HepG2 (cell line): ENCODE measurements at regions of chr6 and their contacts with region 1.

Region 1: GRCh38 chr6:29705389-29706231 is 17.6 kb upstream of the HLA-F start:
- DNase-seq: peak; percentile 62
- ATAC-seq: peak; percentile 64
- H3K4me3 ChIP-seq: no peak overlapping the region
- H3K27ac ChIP-seq: no peak overlapping the region
- H3K4me1 ChIP-seq: peaks cover 10% of the 10 kb centered on the region
- H3K27me3 ChIP-seq: peaks cover 0 to 13% of the 10 kb centered on the region in 2 experiments; a peak in 2 of 5 replicates
- CTCF ChIP-seq: peak; percentile 81
- EP300 ChIP-seq: no peak
- POLR2A ChIP-seq: no peak
- RAD21 ChIP-seq: peak; percentile 74

Region 2: GRCh38 chr6:29752451-29753308 is 47.1 kb after region 1 on chr6:
- CTCF ChIA-PET with region 1: interaction called, 18 read pairs
- POLR2A ChIA-PET with region 1: no interaction called
- in situ Hi-C with region 1: no loop called
- intact Hi-C with region 1: loop called (anchors 1 kb)
- DNase-seq: peak; percentile 80
- ATAC-seq: peak; percentile 83
- H3K4me3 ChIP-seq: peak overlapping the region; percentile 67 to 85 (median 77)
- H3K27ac ChIP-seq: no peak overlapping the region
- H3K4me1 ChIP-seq: peaks cover 23% of the 10 kb centered on the region
- H3K27me3 ChIP-seq: peaks cover 0 to 24% of the 10 kb centered on the region in 2 experiments; a peak in 1 of 5 replicates
- CTCF ChIP-seq: peak; percentile 97
- EP300 ChIP-seq: no peak
- POLR2A ChIP-seq: no peak; a peak in 1 of 4 replicates
- RAD21 ChIP-seq: peak; percentile 91

Region 3: DNA sequence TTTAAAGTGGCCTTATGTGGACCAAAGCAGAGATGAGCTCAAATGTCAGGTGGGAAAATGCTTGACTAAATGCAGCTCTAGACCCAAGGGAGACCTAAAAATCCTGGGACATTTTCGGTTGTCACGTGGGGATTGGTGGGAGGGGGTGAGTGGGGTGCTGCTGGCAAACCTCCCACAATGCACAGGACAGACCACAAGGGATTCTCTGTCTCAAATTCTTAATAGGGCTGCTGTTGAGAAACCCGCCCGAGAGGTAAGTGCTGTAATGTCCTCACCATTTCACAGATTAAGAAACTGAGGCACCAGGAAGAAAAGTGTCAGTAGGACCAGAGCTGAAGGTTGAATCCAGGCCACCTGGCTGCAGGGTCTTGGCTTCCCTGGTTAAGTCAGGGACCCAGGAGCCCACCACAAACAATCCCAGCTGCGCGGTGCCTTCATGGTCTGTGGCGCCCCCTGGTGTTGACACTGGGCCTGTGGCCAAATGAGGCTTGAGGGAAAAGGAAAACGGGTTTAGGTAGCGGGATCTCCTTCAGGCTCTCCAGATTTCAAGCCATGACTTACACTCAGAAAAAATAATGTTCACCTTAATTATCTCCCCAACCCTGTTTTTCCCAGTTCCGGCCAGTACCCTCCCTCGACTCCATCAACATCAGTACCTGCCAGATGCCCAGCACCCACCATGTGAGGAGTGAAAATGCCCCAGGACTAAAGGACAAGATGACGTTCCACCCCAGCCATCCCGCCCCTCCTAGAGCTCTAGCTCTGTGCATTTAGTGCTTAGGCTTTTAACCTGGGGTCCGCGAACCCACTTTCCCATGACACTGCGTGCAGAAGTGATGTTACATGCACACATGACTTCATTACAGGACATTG is 129.2 kb after region 1 on chr6:
- CTCF ChIA-PET with region 1: interaction called, 29 read pairs
- POLR2A ChIA-PET with region 1: no interaction called
- in situ Hi-C with region 1: no loop called
- intact Hi-C with region 1: loop called (anchors 10 kb)
- DNase-seq: no peak
- ATAC-seq: peak; percentile 74
- H3K4me3 ChIP-seq: no peak overlapping the region
- H3K27ac ChIP-seq: no peak overlapping the region
- H3K4me1 ChIP-seq: no peaks in the 10 kb centered on the region
- H3K27me3 ChIP-seq: peaks cover 0 to 3% of the 10 kb centered on the region in 2 experiments; a peak in 1 of 5 replicates
- CTCF ChIP-seq: peak; percentile 89
- EP300 ChIP-seq: no peak
- POLR2A ChIP-seq: no peak
- RAD21 ChIP-seq: peak; percentile 61

Region 4: DNA sequence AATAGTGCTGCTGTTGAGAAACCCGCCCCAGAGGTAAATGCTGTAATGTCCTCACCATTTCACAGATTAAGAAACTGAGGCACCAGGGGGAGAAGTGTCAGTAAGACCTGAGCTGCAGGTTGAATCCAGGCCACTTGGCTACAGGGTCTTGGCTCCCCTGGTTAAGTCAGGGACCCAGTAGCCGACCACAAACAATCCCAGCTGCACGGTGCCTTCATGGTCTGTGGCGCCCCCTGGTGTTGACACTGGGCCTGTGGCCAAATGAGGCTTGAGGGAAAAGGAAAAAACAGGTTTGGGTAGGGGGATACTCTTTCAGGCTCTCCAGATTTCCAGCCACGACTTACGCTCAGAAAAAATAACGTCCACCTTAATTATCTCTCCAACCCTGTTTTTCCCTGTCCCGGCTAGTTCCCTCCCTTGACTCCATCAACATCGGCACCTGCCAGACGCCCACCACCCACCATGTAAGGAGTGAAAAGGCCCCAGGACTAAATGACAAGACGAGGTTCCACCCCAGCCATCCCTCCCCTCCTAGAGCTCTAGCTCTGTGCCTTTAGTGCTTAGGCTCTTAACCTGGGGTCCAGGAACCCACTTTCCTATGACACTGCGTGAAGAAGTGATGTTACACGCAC is 307.8 kb after region 1 on chr6:
- CTCF ChIA-PET with region 1: no interaction called
- POLR2A ChIA-PET with region 1: no interaction called
- in situ Hi-C with region 1: no loop called
- intact Hi-C with region 1: loop called (anchors 2 kb)
- DNase-seq: peak; percentile 17
- ATAC-seq: peak; percentile 85
- H3K4me3 ChIP-seq: no peak overlapping the region
- H3K27ac ChIP-seq: no peak overlapping the region
- H3K4me1 ChIP-seq: no peaks in the 10 kb centered on the region
- H3K27me3 ChIP-seq: no peaks in the 10 kb centered on the region
- CTCF ChIP-seq: peak; percentile 77
- EP300 ChIP-seq: no peak
- POLR2A ChIP-seq: no peak
- RAD21 ChIP-seq: peak; percentile 54